ENCODE measurements at regions of chr5 and their contacts with region 1.

Region 1: DNA sequence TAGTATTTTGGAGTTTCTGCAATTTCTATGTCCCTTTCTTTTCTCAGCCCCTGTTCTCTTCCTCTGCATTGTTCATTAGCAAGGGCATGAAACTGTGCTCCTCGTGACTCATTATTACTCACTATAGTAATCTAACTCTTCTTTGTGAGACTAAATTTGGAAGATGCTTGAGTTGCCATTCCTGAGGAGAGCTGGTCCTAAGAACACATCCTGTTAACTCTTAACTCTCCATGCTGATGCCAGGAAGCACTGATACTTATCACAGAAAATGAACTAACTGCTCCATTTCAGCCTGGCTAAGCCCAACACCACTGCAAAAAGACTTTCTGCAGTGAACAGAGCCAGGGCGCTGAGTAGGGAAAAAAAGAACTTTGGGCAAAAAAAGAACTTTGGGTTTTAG is 10.6 kb upstream of the CSNK1A1 start:
- DNase-seq: peak in 2 of 5 donors; percentile 13 to 61
- H3K4me3 ChIP-seq: no peak overlapping the region
- H3K27ac ChIP-seq: peak overlapping the region in 1 of 2 donors; percentile 72
- H3K4me1 ChIP-seq: peaks cover 0 to 7% (median 7%) of the 10 kb centered on the region in 3 donors
- H3K27me3 ChIP-seq: no peaks in the 10 kb centered on the region
- CTCF ChIP-seq: no peak

Region 2: GRCh38 chr5:149367249-149367971 is 194.4 kb before region 1 on chr5:
- intact Hi-C with region 1: loop called (anchors 10 kb)
- DNase-seq: peak in 4 of 5 donors; percentile 77 to 87 (median 80)
- H3K4me3 ChIP-seq: no peak overlapping the region
- H3K27ac ChIP-seq: no peak overlapping the region
- H3K4me1 ChIP-seq: peaks cover 0 to 10% (median 0%) of the 10 kb centered on the region in 3 donors
- H3K27me3 ChIP-seq: no peaks in the 10 kb centered on the region
- CTCF ChIP-seq: peak; percentile 49

Region 3: DNA sequence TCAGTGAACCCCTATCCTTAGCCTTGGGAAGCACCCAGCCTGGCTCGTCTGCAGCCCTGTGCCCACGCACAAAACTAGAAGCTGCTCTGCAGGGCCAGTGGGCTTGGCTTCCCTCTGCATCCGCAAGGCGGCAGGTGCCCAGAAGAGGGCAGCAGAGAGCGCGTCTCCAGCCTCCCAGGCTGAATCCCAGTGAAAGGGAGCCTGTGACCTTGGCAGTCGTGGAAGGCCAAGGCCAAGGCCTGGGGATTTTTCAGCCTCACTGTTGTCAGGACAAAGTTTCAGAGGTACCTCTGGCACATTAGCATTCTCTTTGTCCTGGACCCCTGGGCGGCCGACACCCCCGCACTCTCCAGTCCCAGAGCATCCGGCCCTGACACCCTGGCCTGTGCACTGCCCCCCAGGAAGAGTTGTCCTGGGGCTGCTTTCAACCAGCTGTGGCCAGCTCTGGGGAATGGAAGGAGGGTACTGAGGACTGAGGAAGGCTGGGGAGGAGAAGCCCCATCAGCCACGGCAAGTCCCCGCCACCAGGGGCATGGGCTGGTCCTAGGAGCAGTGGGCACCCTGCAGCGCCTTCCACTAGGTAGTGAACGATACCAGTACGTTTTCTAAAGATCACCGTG is 119.2 kb before region 1 on chr5:
- intact Hi-C with region 1: loop called (anchors 5 kb)
- DNase-seq: peak; percentile 77 to 92 (median 89)
- H3K4me3 ChIP-seq: no peak overlapping the region
- H3K27ac ChIP-seq: peak overlapping the region; percentile 48 to 68
- H3K4me1 ChIP-seq: peaks cover 0 to 18% (median 7%) of the 10 kb centered on the region in 3 donors
- H3K27me3 ChIP-seq: no peaks in the 10 kb centered on the region
- CTCF ChIP-seq: peak; percentile 97

Region 4: DNA sequence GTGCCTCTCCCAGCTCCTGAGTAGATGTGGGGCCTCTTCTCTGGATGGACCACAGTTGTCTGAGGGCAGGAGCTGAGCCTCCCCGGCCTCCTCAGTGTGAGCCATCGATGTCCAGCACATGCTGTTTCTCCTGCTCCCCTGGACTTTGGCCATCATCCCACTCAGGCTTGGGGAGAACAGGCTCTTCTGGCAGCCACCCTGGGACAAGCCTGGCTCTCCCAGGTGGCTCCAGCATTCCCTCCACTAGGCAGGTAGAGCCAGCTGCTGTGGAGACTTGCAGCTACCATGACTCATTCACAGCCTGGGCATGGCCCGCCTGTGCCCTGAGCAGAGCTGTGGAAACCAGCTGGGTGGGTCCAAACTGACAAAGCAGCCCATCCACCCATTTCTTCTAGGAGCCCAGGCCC is 87.6 kb before region 1 on chr5:
- intact Hi-C with region 1: no loop called
- DNase-seq: no peak
- H3K4me3 ChIP-seq: no peak overlapping the region
- H3K27ac ChIP-seq: no peak overlapping the region
- H3K4me1 ChIP-seq: peaks cover 0 to 14% (median 7%) of the 10 kb centered on the region in 3 donors
- H3K27me3 ChIP-seq: no peaks in the 10 kb centered on the region
- CTCF ChIP-seq: no peak

Region 5: DNA sequence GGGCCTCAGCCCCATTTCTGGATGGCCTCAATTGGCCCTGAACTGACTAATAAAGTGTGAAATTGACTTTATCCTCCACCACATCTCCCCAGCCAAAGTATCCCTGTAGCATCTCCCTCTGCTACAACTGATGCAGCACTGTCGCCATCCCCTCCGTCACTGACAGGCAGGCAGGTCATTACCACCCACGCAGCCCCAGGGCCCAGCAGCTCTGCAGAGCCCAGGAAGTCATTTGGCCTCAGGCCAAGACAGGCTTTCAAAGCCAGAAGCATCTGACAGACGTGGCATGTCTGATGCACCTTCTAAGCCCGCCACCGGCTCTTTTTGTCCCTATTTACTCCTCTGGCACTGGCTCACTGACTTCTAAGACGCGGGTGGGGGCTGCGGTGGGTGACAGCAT is 84.7 kb after region 1 on chr5:
- intact Hi-C with region 1: no loop called
- DNase-seq: peak in 2 of 5 donors; percentile 42 to 62
- H3K4me3 ChIP-seq: no peak overlapping the region
- H3K27ac ChIP-seq: no peak overlapping the region
- H3K4me1 ChIP-seq: no peaks in the 10 kb centered on the region
- H3K27me3 ChIP-seq: no peaks in the 10 kb centered on the region
- CTCF ChIP-seq: no peak

Region 6: DNA sequence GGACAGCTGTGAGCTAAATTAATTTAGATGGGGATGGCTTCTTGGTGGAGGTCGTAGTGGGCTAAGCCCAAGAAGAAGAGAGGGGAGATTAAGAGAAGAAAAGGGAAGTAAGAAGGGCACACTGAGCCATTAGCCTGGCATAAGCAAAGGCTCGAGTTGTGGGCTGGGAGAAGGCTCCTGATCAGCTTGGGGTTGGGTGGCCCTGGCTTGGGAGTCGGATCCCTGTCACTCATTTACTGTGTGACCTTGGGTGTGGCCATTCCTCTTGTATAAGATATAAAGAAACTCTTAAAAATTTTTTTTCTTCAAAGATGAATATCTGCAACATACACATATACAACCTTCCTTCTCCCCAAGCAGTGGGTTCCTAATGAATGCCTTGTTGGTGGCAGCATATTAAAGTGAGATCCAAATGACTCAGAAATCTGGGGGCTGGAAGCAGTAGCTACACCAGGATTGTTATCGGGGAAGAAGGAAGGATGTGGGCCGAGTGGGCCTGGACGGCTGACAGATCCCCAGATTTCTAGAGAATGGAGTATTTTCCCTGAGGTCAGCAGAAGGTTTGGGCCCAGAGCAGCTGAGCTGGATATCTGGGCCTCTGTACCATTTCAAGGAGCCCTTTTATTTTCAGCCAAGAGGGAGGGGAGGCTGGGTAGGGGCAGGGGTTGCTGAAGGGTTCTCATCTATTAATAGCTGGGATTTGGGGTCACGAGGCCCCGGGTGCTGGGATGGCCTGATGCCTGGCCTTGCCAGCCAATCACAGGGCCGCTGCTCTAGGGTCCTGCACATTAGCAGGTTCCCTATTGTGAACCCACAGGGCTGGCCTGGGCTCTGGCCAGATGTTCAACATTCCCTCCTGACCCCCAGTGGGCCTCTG is 220.4 kb after region 1 on chr5:
- intact Hi-C with region 1: no loop called
- DNase-seq: no peak
- H3K4me3 ChIP-seq: no peak overlapping the region
- H3K27ac ChIP-seq: no peak overlapping the region
- H3K4me1 ChIP-seq: peaks cover 0 to 10% (median 7%) of the 10 kb centered on the region in 3 donors
- H3K27me3 ChIP-seq: no peaks in the 10 kb centered on the region
- CTCF ChIP-seq: no peak

Measured in kidney (tissue), 22 donors.